ENCODE measurements at regions of chr16 and their contacts with region 1.

Region 1: DNA sequence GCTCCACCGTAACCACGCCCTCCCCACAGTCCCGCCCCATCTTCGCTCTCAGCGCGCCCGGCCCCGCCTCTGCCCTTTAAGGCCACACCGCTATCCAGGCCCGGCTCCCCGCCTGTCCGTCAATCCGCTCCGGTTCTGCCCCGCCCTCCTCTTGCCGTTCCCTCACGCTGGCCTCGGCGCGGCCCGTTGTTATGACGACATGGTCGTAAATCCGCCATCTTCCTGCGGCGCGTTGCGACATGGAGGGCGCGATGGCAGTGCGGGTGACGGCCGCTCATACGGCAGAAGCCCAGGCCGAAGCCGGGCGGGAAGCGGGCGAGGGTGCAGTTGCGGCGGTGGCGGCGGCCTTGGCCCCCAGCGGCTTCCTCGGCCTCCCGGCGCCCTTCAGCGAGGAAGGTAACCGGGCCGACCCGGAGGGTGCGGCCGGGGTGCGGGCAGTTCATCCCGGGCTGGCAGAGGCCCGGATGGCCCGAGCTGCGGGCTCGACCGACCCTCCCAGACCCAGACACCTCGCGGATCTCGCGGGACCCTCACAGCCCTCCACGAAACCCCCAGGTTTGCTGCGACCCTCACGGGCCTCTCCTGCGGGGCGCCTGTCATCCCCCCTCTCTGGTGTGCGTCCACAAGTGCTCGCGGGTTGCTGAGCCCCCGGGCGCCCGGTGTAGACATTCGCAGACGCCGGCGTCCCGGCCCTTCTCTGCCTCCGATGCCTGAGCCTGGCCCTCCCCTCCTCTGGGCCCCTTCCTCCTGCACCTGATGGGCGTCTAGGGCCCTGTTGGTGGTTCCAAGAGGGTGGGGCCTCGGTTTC is at the start of gene E4F1:
- DNase-seq: peak; percentile 100
- H3K4me3 Mint-ChIP-seq: peak within 1 kb of the TSS; percentile 81
- H3K27ac Mint-ChIP-seq: peak within 1 kb of the TSS; percentile 45
- H3K4me1 Mint-ChIP-seq: peaks cover 16% of the 10 kb centered on the region
- H3K27me3 Mint-ChIP-seq: no peaks in the 10 kb centered on the region
- total RNA-seq, gene E4F1: 19.3 to 19.6 TPM

Region 2: DNA sequence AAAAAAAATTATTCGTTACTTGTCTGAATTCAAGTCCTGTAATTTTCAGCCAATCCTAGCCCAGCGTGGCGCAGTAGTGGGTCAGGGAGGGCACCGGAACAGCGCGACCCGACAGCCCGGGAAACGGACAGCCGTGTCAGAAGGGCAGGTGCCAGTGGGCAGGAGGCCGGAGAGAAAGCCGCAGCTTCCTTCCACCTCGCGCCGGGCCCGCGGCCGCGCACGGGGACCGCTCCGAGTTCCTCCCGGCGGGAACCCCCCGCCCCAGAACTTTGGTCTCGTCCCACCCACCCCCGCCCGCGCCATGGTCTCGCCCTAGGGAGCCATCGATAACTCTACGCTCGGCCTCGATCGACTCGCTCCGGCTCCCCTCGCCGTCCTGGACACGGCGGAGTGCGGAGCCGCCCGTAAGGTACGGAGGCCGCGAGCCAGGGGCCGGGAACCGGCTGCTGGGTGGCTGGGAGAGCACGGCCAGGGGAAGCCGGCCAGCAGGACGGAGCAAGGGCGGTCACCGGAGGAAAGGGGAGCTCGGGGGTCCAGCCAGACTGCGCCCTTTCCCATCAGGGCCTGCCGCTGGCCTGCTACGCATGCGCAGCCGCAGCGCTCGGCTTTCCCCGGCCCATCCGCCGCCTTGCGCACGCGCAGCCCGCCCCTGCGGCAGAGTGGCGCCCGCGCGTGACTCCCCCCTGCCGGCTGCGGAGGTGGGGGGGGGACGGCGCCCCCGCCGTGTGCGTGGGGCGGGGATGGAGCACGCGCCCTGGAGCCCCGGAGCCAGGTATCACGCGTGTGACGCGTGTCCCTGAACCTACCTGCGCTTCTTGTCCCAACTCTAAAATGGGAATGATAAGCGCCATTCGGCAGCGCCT is 18.2 kb before region 1 on chr16 and contains the start of gene MLST8:
- CTCF ChIA-PET with region 1: no interaction called
- POLR2A ChIA-PET with region 1: no interaction called
- intact Hi-C with region 1: loop called (anchors 1 kb)
- DNase-seq: peak; percentile 89
- H3K4me3 Mint-ChIP-seq: peak within 1 kb of the TSS; percentile 84
- H3K27ac Mint-ChIP-seq: peak within 1 kb of the TSS; percentile 79
- H3K4me1 Mint-ChIP-seq: peaks cover 26% of the 10 kb centered on the region
- H3K27me3 Mint-ChIP-seq: no peaks in the 10 kb centered on the region
- total RNA-seq, gene MLST8: 49.7 to 50.4 TPM

Region 3: DNA sequence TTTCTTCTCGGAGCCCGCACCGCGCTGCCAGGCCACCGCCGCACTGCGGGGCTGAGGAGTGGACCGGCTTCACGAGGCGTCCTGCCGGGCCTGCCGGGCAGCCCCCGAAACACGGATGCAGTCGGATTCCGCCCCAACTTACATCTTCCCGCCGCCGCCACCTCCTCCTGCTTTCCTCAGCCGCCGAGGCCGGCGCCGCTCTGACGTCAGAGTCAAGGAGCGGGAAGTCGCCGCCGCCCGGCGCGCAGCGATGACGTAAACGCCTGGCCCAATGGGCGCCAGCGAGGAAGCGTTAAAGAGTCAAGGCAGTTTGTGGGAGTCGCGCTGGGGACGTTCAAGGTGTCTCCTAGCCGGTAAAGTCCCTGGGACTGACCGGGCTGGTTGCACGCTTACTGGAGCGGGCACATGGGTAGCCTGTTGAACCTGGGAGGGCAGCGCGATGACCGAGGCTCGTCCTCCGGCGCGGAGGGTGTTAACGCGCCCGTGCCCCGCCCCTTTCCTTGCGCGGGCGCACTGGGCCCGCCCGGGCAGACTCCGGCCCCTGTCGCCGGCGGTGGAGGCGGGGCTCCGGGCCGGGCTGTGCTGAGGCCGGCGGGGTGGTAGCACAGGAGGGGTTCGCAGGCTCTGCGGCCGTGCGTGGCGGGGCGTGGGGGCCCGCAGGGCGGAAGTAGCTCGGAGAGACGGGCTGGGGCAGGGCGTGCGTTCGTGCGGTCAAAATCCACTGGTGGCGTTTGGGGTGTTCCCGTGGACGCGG is 44.5 kb after region 1 on chr16 and contains the start of gene RNPS1:
- CTCF ChIA-PET with region 1: no interaction called
- POLR2A ChIA-PET with region 1: no interaction called
- intact Hi-C with region 1: loop called (anchors 2 kb)
- DNase-seq: peak; percentile 97
- H3K4me3 Mint-ChIP-seq: peak within 1 kb of the TSS; percentile 88
- H3K27ac Mint-ChIP-seq: peak within 1 kb of the TSS; percentile 97
- H3K4me1 Mint-ChIP-seq: peaks cover 35% of the 10 kb centered on the region
- H3K27me3 Mint-ChIP-seq: no peaks in the 10 kb centered on the region
- total RNA-seq, gene RNPS1: 292 to 294 TPM

Measured in activated CD4-positive, alpha-beta memory T cell treated with anti-CD3 and anti-CD28 coated beads for 36 hours (primary cell).